CD4-positive, alpha-beta T cell (primary cell): ENCODE measurements at regions of chr11 and their contacts with region 1.

Region 1: DNA sequence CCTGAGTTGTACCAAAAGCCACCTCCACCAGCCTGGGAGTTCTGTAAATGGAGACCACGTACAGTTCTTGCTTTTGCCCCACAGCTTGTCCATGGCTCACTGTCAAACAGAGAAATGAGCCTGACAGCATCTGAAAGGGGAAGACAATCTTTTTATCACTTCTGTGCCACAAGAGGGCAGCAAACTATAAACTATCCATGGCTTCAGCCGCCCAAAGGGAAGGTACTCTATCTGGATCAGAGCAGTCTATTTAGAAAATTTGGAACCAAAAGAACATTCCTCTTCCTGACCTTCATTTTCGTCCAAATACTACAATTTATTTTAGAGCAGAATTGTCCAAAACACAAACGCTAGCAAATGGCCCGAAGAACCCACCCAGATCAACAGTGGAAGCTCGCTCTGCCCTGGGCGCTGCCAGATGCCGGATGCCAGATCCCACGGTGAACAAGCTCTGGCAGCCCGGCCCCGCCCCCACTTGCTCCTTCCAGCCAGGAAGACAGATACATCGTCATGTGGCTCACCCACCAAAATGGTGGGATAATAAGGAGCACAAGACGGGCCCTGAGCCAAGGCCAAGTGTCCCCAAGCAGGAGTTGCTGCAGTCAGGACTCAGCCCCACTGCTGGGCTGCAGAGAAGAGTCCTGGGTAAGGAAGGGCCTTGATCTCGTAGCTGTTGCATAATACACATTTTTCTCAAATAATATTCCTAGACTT is 23.9 kb upstream of the SCGB1A1 start:
- DNase-seq: peak in 8 of 14 experiments; percentile 13 to 84 (median 53)
- ATAC-seq: peak; percentile 78
- H3K4me3 ChIP-seq: no peak overlapping the region
- H3K4me3 Mint-ChIP-seq: no peak overlapping the region
- H3K27ac ChIP-seq: no peak overlapping the region
- H3K27ac Mint-ChIP-seq: no peak overlapping the region
- H3K4me1 ChIP-seq: peaks cover 10% of the 10 kb centered on the region
- H3K4me1 Mint-ChIP-seq: peaks cover 18% of the 10 kb centered on the region
- H3K27me3 ChIP-seq: no peaks in the 10 kb centered on the region
- H3K27me3 Mint-ChIP-seq: no peaks in the 10 kb centered on the region
- CTCF ChIP-seq: peak; percentile 81

Region 2: GRCh38 chr11:62295504-62295903 is 99.5 kb before region 1 on chr11:
- CTCF ChIA-PET with region 1: no interaction called
- POLR2A ChIA-PET with region 1: no interaction called
- intact Hi-C with region 1: no loop called
- DNase-seq: no peak
- ATAC-seq: no peak
- H3K4me3 ChIP-seq: no peak overlapping the region
- H3K4me3 Mint-ChIP-seq: no peak overlapping the region
- H3K27ac ChIP-seq: no peak overlapping the region
- H3K27ac Mint-ChIP-seq: no peak overlapping the region
- H3K4me1 ChIP-seq: no peaks in the 10 kb centered on the region
- H3K4me1 Mint-ChIP-seq: no peaks in the 10 kb centered on the region
- H3K27me3 ChIP-seq: peaks cover 4 to 5% of the 10 kb centered on the region in 2 experiments
- H3K27me3 Mint-ChIP-seq: peaks cover 64% of the 10 kb centered on the region
- CTCF ChIP-seq: no peak

Region 3: DNA sequence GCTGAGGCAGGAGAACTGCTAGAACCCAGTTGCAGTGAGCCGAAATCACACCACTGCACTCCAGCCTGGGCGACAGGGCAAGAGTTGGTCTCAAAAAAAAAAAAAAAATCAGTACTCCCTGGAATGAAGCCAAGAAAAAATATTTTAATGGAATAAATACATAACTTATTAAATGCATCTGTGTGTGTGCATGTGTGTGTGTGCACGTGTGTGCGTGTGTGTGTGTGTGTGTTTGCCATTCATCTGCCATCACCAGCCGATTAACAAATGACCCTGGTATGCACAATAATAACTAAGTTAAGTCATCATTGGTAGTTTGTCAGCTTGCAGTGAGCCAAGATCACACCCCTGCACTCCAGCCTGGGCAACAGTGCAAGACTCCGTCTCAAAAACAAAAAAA is 11.2 kb before region 1 on chr11:
- CTCF ChIA-PET with region 1: interaction called, 4 read pairs
- POLR2A ChIA-PET with region 1: interaction called, 3 read pairs
- intact Hi-C with region 1: loop called (anchors 1 kb)
- DNase-seq: no peak
- ATAC-seq: no peak
- H3K4me3 ChIP-seq: no peak overlapping the region
- H3K4me3 Mint-ChIP-seq: no peak overlapping the region
- H3K27ac ChIP-seq: no peak overlapping the region
- H3K27ac Mint-ChIP-seq: no peak overlapping the region
- H3K4me1 ChIP-seq: peaks cover 20% of the 10 kb centered on the region
- H3K4me1 Mint-ChIP-seq: peaks cover 14% of the 10 kb centered on the region
- H3K27me3 ChIP-seq: no peaks in the 10 kb centered on the region
- H3K27me3 Mint-ChIP-seq: peaks cover 5% of the 10 kb centered on the region
- CTCF ChIP-seq: no peak

Region 4: DNA sequence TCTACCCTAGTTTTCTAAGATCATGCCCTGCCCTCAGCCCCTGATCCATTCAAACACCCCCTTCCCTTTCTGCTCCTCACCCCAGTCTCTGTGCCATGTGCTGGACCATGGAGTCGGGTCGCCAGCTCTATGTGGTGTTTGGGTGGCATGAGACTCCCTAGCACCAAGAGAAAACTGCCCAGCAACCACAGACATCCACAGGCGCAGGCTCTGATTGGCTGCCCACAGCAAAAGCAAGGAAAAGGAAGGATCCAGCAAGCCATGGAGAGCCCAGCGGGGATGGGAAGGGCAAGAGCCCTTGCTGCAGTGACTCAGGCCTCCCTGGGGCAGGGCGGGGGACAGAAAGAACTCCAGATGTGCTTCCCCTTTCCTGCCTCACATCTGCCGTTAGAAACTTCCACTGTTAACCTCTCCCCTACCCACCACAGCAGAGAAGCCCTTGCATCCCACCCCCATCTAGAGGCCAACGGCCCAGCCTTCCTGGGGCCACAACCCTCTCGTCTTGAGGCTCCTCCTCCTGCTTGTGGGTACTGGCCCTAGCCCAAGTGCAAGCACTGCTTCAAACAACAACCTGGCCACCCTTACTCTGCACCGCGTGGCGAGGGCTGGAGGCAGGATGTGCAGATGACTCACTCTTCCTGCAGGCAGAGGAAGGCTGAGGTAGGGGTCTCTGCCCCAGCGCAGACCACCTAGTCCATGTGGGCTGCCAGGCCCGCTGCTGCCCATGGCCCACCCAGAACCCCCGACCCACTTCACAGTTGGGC is 161.3 kb after region 1 on chr11:
- CTCF ChIA-PET with region 1: interaction called, 5 read pairs
- POLR2A ChIA-PET with region 1: no interaction called
- intact Hi-C with region 1: loop called in 1 of 2 experiments (anchors 1 kb)
- DNase-seq: peak; percentile 72 to 94 (median 83)
- ATAC-seq: peak; percentile 46
- H3K4me3 ChIP-seq: peak overlapping the region; percentile 49
- H3K4me3 Mint-ChIP-seq: peak overlapping the region; percentile 84
- H3K27ac ChIP-seq: peak overlapping the region; percentile 96 to 97
- H3K27ac Mint-ChIP-seq: peak overlapping the region; percentile 95
- H3K4me1 ChIP-seq: peaks cover 95% of the 10 kb centered on the region
- H3K4me1 Mint-ChIP-seq: peaks cover 84% of the 10 kb centered on the region
- H3K27me3 ChIP-seq: no peaks in the 10 kb centered on the region
- H3K27me3 Mint-ChIP-seq: no peaks in the 10 kb centered on the region
- CTCF ChIP-seq: no peak

Region 5: DNA sequence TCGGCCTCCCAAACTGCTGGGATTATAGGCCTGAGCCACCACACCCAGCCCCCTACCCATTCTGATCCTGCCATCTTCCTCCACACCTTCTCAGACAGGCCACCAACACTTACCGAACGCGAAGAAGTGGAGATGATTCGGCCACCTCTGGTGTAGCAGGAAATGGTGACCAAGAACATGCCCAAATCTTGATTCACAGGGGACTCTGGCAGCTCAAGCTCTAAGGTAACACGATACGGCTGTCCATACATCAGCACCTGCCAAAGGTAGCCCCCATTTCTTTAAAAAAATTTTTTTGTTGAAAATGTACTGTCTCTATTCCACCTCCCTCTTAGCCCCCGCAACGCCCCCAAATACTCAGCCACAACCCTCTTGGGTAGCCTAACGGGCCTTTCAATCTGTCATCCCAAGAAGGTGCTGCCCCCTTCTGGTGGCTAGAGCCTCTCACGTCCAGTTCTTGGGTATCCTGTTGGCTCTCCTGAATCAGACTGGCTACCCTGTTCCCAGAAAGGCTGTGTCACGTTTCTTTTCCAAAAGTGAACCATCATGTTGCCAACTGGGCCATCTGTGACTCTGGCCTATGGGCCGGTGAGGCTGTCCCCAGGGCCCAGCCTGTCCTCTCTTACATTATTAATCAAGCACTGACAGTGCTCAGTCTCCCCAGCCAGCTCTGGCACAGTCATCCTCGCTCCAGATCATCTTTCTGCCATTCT is 299.6 kb after region 1 on chr11:
- CTCF ChIA-PET with region 1: interaction called, 4 read pairs
- POLR2A ChIA-PET with region 1: interaction called, 3 read pairs
- intact Hi-C with region 1: loop called in 1 of 2 experiments (anchors 2 kb)
- DNase-seq: peak; percentile 65 to 89 (median 74)
- ATAC-seq: peak; percentile 93
- H3K4me3 ChIP-seq: no peak overlapping the region
- H3K4me3 Mint-ChIP-seq: no peak overlapping the region
- H3K27ac ChIP-seq: no peak overlapping the region
- H3K27ac Mint-ChIP-seq: no peak overlapping the region
- H3K4me1 ChIP-seq: peaks cover 4% of the 10 kb centered on the region
- H3K4me1 Mint-ChIP-seq: peaks cover 7% of the 10 kb centered on the region
- H3K27me3 ChIP-seq: no peaks in the 10 kb centered on the region
- H3K27me3 Mint-ChIP-seq: no peaks in the 10 kb centered on the region
- CTCF ChIP-seq: peak; percentile 89

Region 6: DNA sequence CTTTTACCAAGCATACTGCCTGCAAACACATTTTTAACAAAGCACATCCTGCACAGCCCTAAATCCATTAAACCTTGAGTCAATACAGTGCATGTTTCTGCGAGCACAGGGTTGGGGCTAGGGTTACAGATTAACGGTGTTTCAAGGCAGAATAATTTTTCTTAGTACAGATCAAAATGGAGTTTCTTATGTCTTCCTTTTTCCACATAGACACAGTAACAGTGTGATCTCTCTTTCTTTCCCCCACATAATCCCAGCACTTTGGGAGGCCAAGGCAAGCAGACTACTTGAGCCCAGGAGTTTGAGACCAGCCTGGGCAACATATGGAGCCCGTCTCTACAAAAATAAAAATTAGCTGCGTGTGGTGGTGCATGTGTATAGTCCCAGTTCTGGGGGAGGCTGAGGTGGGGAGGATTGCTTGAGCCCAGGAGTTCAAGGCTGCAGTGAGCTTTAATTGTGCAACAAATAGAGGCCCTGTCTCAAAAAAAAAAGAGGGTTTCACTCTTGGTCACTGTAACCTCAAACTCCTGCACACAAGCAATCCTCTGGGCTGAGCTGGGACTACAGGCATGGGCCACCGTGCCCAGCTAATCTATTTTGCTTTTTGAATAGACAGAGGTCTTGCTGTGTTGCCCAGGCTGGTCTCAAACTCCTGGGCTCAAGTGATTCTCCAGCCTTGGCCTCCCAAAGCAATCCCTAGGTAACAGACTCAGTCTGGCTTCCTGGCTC is 466.0 kb after region 1 on chr11:
- CTCF ChIA-PET with region 1: no interaction called
- POLR2A ChIA-PET with region 1: no interaction called
- intact Hi-C with region 1: loop called in 1 of 2 experiments (anchors 5 kb)
- DNase-seq: no peak
- ATAC-seq: no peak
- H3K4me3 ChIP-seq: no peak overlapping the region
- H3K4me3 Mint-ChIP-seq: no peak overlapping the region
- H3K27ac ChIP-seq: no peak overlapping the region
- H3K27ac Mint-ChIP-seq: no peak overlapping the region
- H3K4me1 ChIP-seq: peaks cover 18% of the 10 kb centered on the region
- H3K4me1 Mint-ChIP-seq: peaks cover 18% of the 10 kb centered on the region
- H3K27me3 ChIP-seq: no peaks in the 10 kb centered on the region
- H3K27me3 Mint-ChIP-seq: no peaks in the 10 kb centered on the region
- CTCF ChIP-seq: no peak